ENCODE measurements at regions of chr9 and their contacts with region 1.

Region 1: GRCh38 chr9:21812946-21813568 is 10.6 kb downstream of the MTAP start:
- DNase-seq: peak; percentile 42 to 81
- H3K4me3 ChIP-seq: no peak overlapping the region
- H3K4me1 ChIP-seq: no peaks in the 10 kb centered on the region
- H3K27me3 ChIP-seq: no peaks in the 10 kb centered on the region

Region 2: DNA sequence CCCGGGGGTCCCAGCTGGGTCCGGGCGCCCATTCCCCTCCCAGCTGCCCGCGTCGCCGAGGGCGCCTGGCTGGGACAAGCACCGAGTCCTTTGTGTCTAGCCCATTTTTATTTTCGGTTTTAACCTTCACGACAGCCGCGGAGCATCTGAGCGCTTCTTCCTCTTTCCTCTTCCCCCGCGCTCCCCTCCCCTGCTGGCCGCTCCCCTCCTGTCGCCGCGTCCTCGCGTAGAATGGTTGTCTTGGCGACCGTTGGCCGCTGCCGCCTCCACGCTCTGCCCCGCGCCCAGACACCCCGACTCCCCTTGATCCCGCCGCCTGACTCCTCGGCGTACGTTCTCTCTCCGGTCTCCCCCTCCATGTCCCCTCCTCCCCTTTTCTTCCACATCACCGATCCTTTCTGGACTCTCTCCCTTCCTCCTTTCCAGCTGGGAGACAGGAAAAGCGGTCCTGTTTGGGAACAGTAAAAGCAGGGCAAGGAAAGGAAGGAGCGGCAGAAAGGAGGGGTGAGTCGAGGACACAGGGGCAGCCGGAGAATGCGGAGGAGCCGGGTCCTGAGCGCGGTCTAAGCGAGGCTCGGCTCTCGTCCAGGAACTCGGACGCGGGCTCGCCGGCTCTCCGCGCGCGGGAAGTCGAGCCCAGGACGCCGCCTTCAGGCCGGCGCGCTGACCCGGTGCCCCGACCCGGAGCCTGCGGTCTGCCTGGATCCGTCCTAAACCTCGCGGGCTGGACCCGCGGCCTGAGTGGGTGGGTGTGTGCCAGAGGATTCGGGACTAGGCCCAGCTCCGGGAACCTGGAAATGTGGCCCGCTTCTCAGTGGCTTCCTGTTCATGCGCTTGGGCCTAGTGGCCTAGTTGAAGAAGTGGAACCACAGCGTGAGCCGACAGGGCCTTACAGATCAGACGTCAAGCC is 182.4 kb after region 1 on chr9:
- in situ Hi-C with region 1: loop called (anchors 10 kb)
- DNase-seq: peak; percentile 75 to 87
- H3K4me3 ChIP-seq: peak overlapping the region; percentile 82
- H3K4me1 ChIP-seq: peaks cover 22% of the 10 kb centered on the region
- H3K27me3 ChIP-seq: no peaks in the 10 kb centered on the region

Region 3: GRCh38 chr9:22119537-22120158 is 306.6 kb after region 1 on chr9:
- in situ Hi-C with region 1: loop called (anchors 10 kb)
- DNase-seq: peak; percentile 19 to 39
- H3K4me3 ChIP-seq: no peak overlapping the region
- H3K4me1 ChIP-seq: no peaks in the 10 kb centered on the region
- H3K27me3 ChIP-seq: no peaks in the 10 kb centered on the region

Region 4: GRCh38 chr9:22232971-22233370 is 419.9 kb after region 1 on chr9:
- in situ Hi-C with region 1: loop called (anchors 5 kb)
- DNase-seq: no peak
- H3K4me3 ChIP-seq: no peak overlapping the region
- H3K4me1 ChIP-seq: no peaks in the 10 kb centered on the region
- H3K27me3 ChIP-seq: no peaks in the 10 kb centered on the region

Region 5: GRCh38 chr9:22452415-22453010 is 639.5 kb after region 1 on chr9:
- in situ Hi-C with region 1: loop called (anchors 10 kb)
- DNase-seq: peak; percentile 17 to 65
- H3K4me3 ChIP-seq: no peak overlapping the region
- H3K4me1 ChIP-seq: peaks cover 4% of the 10 kb centered on the region; the same call in 1 of the 2 replicates
- H3K27me3 ChIP-seq: no peaks in the 10 kb centered on the region

Measured in HAP-1 (cell line).